ENCODE measurements at regions of chr6 and their contacts with region 1.

Region 1: GRCh38 chr6:96153775-96154174 is 138.0 kb downstream of the FUT9 start:
- DNase-seq: no peak
- H3K4me3 Mint-ChIP-seq: no peak overlapping the region
- H3K27ac Mint-ChIP-seq: no peak overlapping the region
- H3K4me1 Mint-ChIP-seq: peaks cover 11% of the 10 kb centered on the region
- H3K27me3 Mint-ChIP-seq: no peaks in the 10 kb centered on the region
- CTCF ChIP-seq: no peak

Region 2: DNA sequence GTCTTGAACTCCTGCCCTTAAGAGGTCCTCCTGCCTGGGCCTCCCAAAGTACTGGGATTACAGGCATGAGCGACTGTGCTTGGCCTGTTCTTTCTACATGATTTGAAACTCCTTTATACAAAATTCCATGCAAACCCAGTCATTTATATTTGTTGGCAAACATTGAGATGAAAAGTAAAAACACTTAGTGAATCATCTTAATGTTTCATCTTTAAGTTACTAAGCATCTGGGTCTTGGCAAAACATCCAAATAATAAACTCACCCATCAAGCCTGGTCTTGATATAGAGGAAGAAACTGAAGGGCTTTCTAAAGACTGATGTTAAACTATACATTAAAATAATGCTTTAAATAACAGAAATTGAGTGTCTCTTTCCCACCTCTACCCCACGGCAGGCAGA is 42.9 kb before region 1 on chr6:
- CTCF ChIA-PET with region 1: no interaction called
- intact Hi-C with region 1: no loop called
- DNase-seq: no peak
- H3K4me3 Mint-ChIP-seq: no peak overlapping the region
- H3K27ac Mint-ChIP-seq: no peak overlapping the region
- H3K4me1 Mint-ChIP-seq: peaks cover 9% of the 10 kb centered on the region
- H3K27me3 Mint-ChIP-seq: no peaks in the 10 kb centered on the region
- CTCF ChIP-seq: no peak

Region 3: DNA sequence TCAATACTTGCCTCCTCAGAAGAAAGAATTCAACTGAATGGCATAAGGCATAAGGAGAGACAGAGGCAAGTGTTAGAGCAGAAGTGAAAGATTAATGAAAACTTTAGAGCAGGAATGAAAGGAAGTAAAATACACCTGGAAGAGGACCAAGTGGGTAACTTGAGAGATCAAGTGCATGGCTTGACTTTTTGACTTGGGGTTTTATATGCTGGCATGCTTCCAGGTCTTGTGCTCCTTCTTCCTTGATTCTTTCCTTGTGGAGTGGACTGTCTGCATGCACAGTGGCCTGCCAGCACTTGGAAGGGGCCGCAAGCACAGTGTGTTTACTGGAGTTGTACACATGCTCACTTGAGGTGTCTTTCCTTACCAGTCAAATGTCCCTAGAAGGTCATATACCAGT is 145.8 kb after region 1 on chr6:
- CTCF ChIA-PET with region 1: no interaction called
- intact Hi-C with region 1: loop called (anchors 5 kb)
- DNase-seq: peak; percentile 24
- H3K4me3 Mint-ChIP-seq: no peak overlapping the region
- H3K27ac Mint-ChIP-seq: no peak overlapping the region
- H3K4me1 Mint-ChIP-seq: peaks cover 45% of the 10 kb centered on the region
- H3K27me3 Mint-ChIP-seq: no peaks in the 10 kb centered on the region
- CTCF ChIP-seq: no peak

Region 4: GRCh38 chr6:96468681-96469224 is 315.0 kb after region 1 on chr6:
- CTCF ChIA-PET with region 1: interaction called, 4 read pairs
- intact Hi-C with region 1: loop called (anchors 1 kb)
- DNase-seq: no peak
- H3K4me3 Mint-ChIP-seq: no peak overlapping the region
- H3K27ac Mint-ChIP-seq: no peak overlapping the region
- H3K4me1 Mint-ChIP-seq: no peaks in the 10 kb centered on the region
- H3K27me3 Mint-ChIP-seq: no peaks in the 10 kb centered on the region
- CTCF ChIP-seq: no peak

Measured in Calu3 (cell line).